ENCODE measurements at regions of chr6 and their contacts with region 1.

Region 1: DNA sequence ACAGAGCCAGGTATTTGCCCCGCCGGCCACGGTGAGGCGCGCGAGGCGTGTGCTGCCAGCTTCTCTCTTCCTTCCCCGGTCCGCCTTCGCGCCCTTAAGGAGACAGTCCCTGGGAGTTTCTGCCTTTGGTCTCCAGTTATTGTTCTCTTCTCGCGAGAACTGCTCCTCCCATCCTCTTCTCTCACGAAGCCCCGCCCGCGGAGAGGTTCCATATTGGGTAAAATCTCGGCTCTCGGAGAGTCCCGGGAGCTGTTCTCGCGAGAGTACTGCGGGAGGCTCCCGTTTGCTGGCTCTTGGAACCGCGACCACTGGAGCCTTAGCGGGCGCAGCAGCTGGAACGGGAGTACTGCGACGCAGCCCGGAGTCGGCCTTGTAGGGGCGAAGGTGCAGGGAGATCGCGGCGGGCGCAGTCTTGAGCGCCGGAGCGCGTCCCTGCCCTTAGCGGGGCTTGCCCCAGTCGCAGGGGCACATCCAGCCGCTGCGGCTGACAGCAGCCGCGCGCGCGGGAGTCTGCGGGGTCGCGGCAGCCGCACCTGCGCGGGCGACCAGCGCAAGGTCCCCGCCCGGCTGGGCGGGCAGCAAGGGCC is at the start of gene MAPK14:
- DNase-seq: peak; percentile 99
- total RNA-seq, gene MAPK14: 25.6 TPM

Region 2: GRCh38 chr6:36094753-36095496 is 67.3 kb after region 1 on chr6:
- intact Hi-C with region 1: loop called (anchors 1 kb)
- DNase-seq: peak; percentile 86

Region 3: GRCh38 chr6:36196880-36197548 is 169.4 kb after region 1 on chr6:
- intact Hi-C with region 1: loop called (anchors 5 kb)
- DNase-seq: peak; percentile 100

Region 4: DNA sequence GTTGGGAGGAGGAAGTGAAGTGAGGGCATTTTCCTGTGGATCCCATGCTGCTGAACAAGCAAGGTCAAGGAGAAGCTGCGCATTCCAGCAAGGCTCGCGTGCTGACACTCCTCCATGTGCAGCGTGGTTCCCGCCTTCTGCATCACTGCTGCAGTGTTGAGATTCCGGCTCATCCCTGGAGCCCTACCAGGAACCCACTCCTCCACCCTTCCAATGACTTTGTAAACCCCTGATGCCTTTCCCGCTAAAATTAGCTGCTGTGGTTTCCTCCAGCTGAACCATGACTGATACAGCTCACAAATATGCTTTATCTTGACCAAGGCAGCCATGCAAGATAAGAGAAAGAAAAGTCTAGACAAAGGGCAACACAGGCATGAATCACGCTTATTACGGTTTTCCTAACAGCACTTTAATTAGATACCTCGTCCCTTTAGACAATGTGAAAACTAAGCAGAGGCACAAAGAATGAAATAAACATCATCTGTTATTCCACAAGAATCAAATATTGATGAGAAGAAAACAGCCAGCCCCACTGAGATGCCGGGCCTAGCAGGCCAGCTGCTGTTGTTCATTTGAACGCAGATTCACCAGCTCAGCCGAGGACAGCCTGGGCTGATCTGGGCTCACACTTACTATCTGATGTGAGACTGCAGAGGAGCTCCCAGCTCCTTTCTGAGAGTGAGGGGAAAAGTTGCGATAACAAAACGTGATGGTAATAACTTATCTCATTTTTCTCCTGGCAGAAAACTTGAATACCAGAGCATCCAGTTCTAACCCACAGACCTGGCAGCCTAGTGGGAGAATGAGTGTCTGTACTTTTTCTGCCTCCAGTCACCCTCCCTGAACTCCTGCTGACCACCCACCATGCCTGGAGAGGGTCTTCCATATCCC is 323.3 kb after region 1 on chr6:
- intact Hi-C with region 1: loop called (anchors 10 kb)
- DNase-seq: no peak